Activated T-helper 2 cell treated with anti-CD3 and anti-CD28 coated beads, Interferon-gamma antibody, Interleukin-2, Interleukin-4, amounts not matched to agents 10 μg/mL and 5 μg/mL and 100 μg/mL, durations not matched to agents 14 hours and 24 hours and 36 hours (primary cell): ENCODE measurements at regions of chr5 and their contacts with region 1.

Region 1: DNA sequence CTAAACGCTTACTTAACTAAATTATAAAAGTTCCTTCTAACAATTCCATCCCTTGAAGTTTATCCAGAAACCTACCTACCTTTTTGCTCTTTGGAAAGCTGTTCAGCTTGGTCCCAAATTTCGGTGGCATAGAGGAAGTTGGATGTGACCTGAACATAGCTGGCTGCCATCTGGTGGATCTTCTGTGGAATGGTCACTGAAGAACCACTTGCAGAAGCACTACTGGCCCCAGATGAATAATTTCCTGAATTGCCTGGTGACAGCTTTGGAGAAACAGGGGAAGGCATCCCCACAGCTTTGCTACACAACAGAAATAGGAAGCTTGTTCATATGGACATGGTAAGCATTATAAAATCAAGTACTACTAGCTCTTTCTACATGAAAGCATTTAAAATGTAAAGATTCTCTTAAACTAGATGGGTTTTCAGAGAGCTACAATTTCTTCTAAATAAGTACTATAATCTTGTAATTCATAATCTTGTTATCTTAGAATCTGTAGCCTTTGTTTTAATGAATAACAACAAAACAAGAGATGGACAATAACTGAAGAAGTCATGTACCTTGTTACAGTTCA is 9.9 kb downstream of the LEAP2 start:
- DNase-seq: no peak
- H3K4me3 Mint-ChIP-seq: no peak overlapping the region
- H3K27ac Mint-ChIP-seq: no peak overlapping the region
- H3K4me1 Mint-ChIP-seq: peaks cover 9% of the 10 kb centered on the region
- H3K27me3 Mint-ChIP-seq: no peaks in the 10 kb centered on the region

Region 2: GRCh38 chr5:132386644-132387286 is 496.6 kb before region 1 on chr5:
- intact Hi-C with region 1: loop called (anchors 5 kb)
- DNase-seq: peak; percentile 73
- H3K4me3 Mint-ChIP-seq: no peak overlapping the region
- H3K27ac Mint-ChIP-seq: peak overlapping the region; percentile 24
- H3K4me1 Mint-ChIP-seq: peaks cover 42% of the 10 kb centered on the region
- H3K27me3 Mint-ChIP-seq: no peaks in the 10 kb centered on the region

Region 3: DNA sequence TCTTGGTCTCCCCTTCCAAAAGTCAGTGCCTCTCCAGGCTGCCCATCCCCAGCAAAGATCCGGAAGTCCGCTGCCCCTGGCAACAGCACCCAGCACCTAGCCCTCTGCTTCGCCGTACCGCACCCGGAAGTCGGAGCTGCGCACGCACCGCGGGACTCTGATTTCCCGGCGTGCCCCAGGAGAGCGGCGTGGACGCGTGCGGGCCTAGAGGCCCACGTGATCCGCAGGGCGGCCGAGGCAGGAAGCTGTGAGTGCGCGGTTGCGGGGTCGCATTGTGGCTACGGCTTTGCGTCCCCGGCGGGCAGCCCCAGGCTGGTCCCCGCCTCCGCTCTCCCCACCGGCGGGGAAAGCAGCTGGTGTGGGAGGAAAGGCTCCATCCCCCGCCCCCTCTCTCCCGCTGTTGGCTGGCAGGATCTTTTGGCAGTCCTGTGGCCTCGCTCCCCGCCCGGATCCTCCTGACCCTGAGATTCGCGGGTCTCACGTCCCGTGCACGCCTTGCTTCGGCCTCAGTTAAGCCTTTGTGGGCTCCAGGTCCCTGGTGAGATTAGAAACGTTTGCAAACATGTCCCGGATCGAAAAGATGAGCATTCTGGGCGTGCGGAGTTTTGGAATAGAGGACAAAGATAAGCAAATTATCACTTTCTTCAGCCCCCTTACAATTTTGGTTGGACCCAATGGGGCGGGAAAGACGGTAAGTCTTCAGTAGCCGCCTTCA is 326.4 kb before region 1 on chr5 and contains the start of gene RAD50:
- intact Hi-C with region 1: no loop called
- DNase-seq: peak; percentile 92
- H3K4me3 Mint-ChIP-seq: peak within 1 kb of the TSS; percentile 89
- H3K27ac Mint-ChIP-seq: peak within 1 kb of the TSS; percentile 93
- H3K4me1 Mint-ChIP-seq: peaks cover 33% of the 10 kb centered on the region
- H3K27me3 Mint-ChIP-seq: no peaks in the 10 kb centered on the region
- total RNA-seq, gene RAD50: 49.2 and 55.8 TPM in 2 replicates

Region 4: DNA sequence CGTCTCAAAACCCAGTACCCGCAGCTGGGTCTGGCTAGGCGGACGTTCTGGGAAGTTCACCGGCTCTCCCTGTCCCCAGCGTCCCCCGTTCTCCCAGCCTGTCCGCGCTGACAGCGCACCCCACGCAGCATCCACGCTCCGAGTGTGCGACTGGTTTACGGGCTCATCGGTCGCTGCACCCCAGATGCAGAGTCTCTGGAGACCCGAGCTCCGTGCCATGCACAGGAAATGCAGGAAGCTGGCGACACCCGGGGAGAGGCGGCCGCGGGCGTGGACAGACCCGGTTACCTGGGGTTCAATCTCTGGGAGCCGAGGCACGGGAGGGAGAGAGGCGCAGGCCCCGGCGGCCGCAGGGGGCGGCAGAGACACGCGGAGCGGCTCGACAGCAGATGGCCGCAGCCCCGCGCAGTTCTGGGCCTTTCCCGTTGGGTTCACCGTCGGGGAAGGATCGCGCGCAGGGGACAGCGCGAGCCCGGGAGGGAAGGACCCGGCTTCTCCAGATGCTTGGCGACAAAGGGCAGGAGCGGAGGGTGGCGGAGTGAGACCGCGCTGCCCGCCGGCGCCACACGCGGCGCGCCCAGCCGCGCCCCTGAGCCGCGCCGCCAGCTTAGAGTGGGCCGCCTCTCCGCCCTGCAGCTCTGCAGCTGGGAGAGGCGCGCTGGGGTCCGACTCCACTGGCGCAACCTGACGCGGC is 53.5 kb before region 1 on chr5:
- intact Hi-C with region 1: loop called (anchors 1 kb)
- DNase-seq: peak; percentile 67
- H3K4me3 Mint-ChIP-seq: peak overlapping the region; percentile 87
- H3K27ac Mint-ChIP-seq: peak overlapping the region; percentile 66
- H3K4me1 Mint-ChIP-seq: peaks cover 12% of the 10 kb centered on the region
- H3K27me3 Mint-ChIP-seq: peaks cover 63% of the 10 kb centered on the region

Region 5: GRCh38 chr5:132901730-132902129 is 18.4 kb after region 1 on chr5:
- intact Hi-C with region 1: no loop called
- DNase-seq: no peak
- H3K4me3 Mint-ChIP-seq: no peak overlapping the region
- H3K27ac Mint-ChIP-seq: no peak overlapping the region
- H3K4me1 Mint-ChIP-seq: peaks cover 4% of the 10 kb centered on the region
- H3K27me3 Mint-ChIP-seq: no peaks in the 10 kb centered on the region

Region 6: GRCh38 chr5:132951897-132952296 is 68.5 kb after region 1 on chr5:
- intact Hi-C with region 1: no loop called
- DNase-seq: no peak
- H3K4me3 Mint-ChIP-seq: no peak overlapping the region
- H3K27ac Mint-ChIP-seq: no peak overlapping the region
- H3K4me1 Mint-ChIP-seq: peaks cover 12% of the 10 kb centered on the region
- H3K27me3 Mint-ChIP-seq: no peaks in the 10 kb centered on the region